ENCODE measurements at regions of chr11 and their contacts with region 1.

Region 1: DNA sequence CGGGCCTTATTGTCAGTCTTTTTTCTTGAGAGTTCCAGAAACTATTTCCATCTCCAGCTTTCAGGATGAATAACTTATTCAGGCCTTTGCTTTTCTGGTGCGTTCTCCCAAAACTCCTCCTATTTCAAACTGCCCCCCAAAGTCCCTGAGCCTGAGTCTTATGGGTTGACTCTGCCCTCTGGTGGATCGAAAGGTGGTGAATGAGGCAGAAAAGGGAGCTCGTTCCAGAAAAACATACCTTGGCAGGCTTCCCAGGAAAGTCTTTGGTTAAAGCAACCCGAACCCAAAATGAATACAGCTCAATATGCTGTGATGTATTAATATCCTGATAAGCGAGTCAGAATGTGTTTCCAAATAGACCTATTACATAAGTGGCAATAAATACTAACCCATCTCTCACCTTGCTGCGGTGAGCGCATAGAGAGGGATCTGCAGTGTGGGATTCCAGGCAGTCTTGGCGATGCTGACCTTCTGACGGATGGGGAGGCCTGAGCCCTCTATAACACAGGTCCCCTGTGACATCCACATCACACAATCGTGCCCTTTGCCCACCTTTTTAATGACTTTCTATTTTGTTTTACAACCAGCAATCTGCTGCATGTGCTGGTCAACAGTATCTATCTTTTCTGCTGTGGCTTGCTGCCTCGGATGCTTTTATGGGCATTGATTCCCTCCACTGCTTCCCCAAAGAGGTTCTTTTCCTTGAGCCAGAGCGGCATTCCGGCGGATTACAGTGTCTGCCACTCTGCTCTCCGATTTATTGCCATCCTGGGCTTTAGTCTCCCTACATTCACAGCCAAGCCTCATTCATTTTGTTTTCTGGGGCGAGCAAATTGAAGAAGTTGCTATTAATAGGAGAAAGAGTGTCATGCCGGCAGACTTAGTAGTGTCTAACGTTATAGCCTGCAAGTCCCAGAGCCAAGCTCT is 756.8 kb downstream of the NTM start:
- DNase-seq: peak; percentile 26
- H3K4me3 ChIP-seq: peak overlapping the region; percentile 19
- H3K27me3 ChIP-seq: no peaks in the 10 kb centered on the region
- CTCF ChIP-seq: peak; percentile 79

Region 2: DNA sequence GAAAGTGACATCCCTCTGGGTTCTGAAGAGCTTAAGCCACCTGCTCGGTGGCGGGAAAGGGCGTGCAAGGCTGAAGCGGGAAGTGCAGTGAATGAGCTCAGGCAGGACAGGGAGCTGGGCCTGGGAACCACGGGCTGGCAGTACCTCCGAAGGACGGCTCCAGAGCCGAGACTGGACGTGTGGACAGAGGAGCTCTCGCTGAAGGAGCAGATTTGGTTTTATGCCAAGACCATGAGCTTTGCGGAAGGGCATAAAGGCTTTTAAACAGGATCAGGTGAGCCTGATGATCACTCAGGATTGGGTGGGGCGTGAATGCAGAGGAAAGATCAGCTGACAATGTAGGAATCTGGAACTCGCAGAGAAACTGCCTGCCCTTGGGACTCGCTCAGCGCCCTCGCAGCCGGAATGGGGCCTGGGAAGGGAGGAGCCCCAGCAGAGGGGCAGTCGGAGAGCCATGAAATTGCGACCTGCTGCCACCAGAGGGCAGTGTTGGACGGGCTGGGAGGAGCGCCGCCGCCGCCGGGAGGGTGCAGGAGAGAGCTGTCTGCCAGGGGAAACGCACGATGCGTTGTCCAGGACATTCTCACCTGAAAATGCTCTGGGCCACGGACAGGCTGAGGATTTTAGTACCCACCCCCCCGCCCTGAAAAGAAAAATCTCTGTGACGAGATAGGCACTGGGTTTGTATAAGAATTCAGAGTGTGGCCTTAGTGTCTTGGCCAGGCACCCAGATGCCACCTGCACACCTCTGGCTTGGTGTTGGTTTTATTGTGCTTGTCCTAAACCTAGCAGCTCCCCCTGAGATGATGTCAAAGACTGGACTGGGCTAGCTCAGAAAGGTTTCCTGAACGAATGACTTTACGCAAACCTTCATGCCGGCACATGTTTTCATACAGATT is 432.5 kb before region 1 on chr11:
- CTCF ChIA-PET with region 1: interaction called, 12 read pairs
- POLR2A ChIA-PET with region 1: no interaction called
- DNase-seq: peak; percentile 18
- H3K4me3 ChIP-seq: no peak overlapping the region
- H3K27me3 ChIP-seq: no peaks in the 10 kb centered on the region
- CTCF ChIP-seq: peak; percentile 98

Region 3: DNA sequence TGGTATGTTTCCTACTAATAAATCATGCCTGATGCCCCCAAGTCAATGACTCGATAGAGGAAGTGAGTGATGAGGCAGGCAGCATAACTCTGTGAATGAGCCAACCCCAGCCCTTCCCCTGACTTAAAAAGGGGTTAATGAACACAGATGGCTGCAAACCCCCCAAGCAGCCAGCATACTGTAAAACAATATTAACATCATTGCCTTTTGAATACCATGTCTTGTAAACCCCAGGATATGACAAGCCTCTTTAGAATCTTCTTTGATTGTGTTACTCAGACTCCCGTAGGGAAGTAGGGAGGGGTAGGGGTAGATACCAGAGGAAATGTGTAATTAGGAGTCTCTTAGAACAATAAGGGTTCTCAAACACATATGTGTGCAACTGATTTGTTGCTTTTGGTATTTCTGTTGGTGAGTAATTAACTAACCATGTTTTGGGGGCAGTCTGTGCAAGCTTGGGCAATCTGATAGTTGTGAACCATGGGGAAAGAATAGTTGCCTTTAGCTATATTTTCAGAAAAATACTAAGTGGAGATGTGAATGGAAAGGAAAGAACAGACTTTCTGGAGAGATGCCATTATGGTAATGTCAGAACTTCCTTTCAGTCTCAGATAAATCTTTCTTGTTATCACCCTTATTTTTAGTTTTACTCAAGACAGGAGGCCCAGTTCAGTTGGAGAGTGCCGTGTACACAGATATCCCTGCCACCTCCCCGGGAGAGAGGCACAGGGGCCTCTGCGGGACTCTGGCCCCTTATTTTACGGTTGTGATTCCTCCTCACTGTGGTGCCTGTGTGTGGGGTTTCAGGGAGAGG is 55.0 kb before region 1 on chr11:
- CTCF ChIA-PET with region 1: interaction called, 10 read pairs
- POLR2A ChIA-PET with region 1: no interaction called
- DNase-seq: peak; percentile 97
- H3K4me3 ChIP-seq: no peak overlapping the region
- H3K27me3 ChIP-seq: no peaks in the 10 kb centered on the region
- CTCF ChIP-seq: no peak

Region 4: DNA sequence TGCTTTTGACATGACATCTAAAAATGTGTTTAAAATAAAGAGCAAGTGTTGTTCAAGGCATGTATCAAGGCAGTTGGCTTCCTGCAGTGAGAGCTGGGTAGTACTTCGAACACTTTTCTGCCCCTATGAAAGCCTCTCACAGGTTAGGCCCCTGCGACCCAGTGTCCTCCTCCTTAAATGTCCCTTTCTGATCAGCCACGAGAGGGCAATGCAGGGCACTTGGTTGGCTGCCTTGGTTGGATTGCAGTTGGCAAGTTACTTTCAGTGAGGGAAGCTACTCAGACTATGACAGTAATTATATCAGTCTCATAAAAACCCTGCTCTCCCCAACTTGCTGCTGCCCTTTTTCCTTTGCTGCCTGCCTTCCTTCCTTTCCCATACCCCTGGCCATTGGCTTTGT is 13.1 kb before region 1 on chr11:
- CTCF ChIA-PET with region 1: interaction called, 23 read pairs
- POLR2A ChIA-PET with region 1: no interaction called
- DNase-seq: no peak
- H3K4me3 ChIP-seq: no peak overlapping the region
- H3K27me3 ChIP-seq: no peaks in the 10 kb centered on the region
- CTCF ChIP-seq: peak; percentile 28; the same call in 1 of the 2 replicates